CD8-positive, alpha-beta memory T cell (primary cell): ENCODE measurements at regions of chr17 and their contacts with region 1.

Region 1: GRCh38 chr17:77054936-77055335 is 85.8 kb upstream of the SEC14L1 start:
- DNase-seq: no peak
- H3K4me3 ChIP-seq: no peak overlapping the region
- H3K4me3 Mint-ChIP-seq: no peak overlapping the region
- H3K27ac ChIP-seq: no peak overlapping the region
- H3K27ac Mint-ChIP-seq: no peak overlapping the region
- H3K4me1 ChIP-seq: no peaks in the 10 kb centered on the region
- H3K4me1 Mint-ChIP-seq: peaks cover 2 to 4% (median 3%) of the 10 kb centered on the region in 3 donors
- H3K27me3 ChIP-seq: no peaks in the 10 kb centered on the region
- H3K27me3 Mint-ChIP-seq: peaks cover 5 to 41% of the 10 kb centered on the region in 2 donors

Region 2: GRCh38 chr17:76887802-76888201 is 167.1 kb before region 1 on chr17:
- CTCF ChIA-PET with region 1: interaction called, 10 read pairs
- POLR2A ChIA-PET with region 1: no interaction called
- DNase-seq: no peak
- H3K4me3 ChIP-seq: no peak overlapping the region
- H3K4me3 Mint-ChIP-seq: no peak overlapping the region
- H3K27ac ChIP-seq: no peak overlapping the region
- H3K27ac Mint-ChIP-seq: no peak overlapping the region
- H3K4me1 ChIP-seq: no peaks in the 10 kb centered on the region
- H3K4me1 Mint-ChIP-seq: no peaks in the 10 kb centered on the region
- H3K27me3 ChIP-seq: no peaks in the 10 kb centered on the region
- H3K27me3 Mint-ChIP-seq: peaks cover 4 to 6% of the 10 kb centered on the region in 2 donors

Region 3: GRCh38 chr17:76997981-76998531 is 56.9 kb before region 1 on chr17:
- CTCF ChIA-PET with region 1: interaction called, 12 read pairs
- POLR2A ChIA-PET with region 1: no interaction called
- DNase-seq: peak; percentile 24 to 85 (median 77)
- H3K4me3 ChIP-seq: peak overlapping the region; percentile 47
- H3K4me3 Mint-ChIP-seq: peak overlapping the region; percentile 3 to 75 (median 69)
- H3K27ac ChIP-seq: peak overlapping the region; percentile 67
- H3K27ac Mint-ChIP-seq: peak overlapping the region; percentile 79 to 97 (median 90)
- H3K4me1 ChIP-seq: peaks cover 52% of the 10 kb centered on the region
- H3K4me1 Mint-ChIP-seq: peaks cover 41 to 57% (median 54%) of the 10 kb centered on the region in 3 donors
- H3K27me3 ChIP-seq: no peaks in the 10 kb centered on the region
- H3K27me3 Mint-ChIP-seq: no peaks in the 10 kb centered on the region

Region 4: DNA sequence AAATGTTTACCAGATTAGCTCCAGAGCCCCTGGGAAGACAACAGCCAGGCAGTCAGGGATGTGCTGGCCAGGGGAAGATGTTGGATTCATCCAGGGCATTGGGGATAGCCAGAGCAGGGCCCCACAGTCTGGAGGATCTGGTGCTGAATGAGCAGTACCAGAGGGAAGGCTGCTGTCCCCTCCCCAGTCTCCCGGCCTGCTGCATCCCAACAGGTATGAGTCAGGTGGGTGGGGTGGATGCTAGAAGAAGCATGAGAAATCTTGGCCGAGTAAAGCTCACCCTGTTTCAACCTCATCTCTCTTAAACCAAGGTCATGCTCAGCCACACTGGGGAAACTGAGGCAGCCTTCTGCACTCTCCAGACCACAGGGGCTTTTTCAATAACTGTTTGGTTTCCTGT is 14.0 kb after region 1 on chr17:
- CTCF ChIA-PET with region 1: interaction called, 27 read pairs
- POLR2A ChIA-PET with region 1: no interaction called
- DNase-seq: no peak
- H3K4me3 ChIP-seq: no peak overlapping the region
- H3K4me3 Mint-ChIP-seq: no peak overlapping the region
- H3K27ac ChIP-seq: no peak overlapping the region
- H3K27ac Mint-ChIP-seq: no peak overlapping the region
- H3K4me1 ChIP-seq: no peaks in the 10 kb centered on the region
- H3K4me1 Mint-ChIP-seq: peaks cover 0 to 3% (median 0%) of the 10 kb centered on the region in 3 donors
- H3K27me3 ChIP-seq: no peaks in the 10 kb centered on the region
- H3K27me3 Mint-ChIP-seq: peaks cover 14 to 53% of the 10 kb centered on the region in 2 donors